ENCODE measurements at regions of chr6 and their contacts with region 1.

Region 1: GRCh38 chr6:138765896-138766655 is 7.5 kb upstream of the CCDC28A start:
- DNase-seq: peak in 1 of 2 experiments; percentile 25
- H3K4me3 ChIP-seq: no peak overlapping the region
- H3K4me3 Mint-ChIP-seq: no peak overlapping the region
- H3K27ac Mint-ChIP-seq: no peak overlapping the region
- H3K4me1 ChIP-seq: no peaks in the 10 kb centered on the region
- H3K4me1 Mint-ChIP-seq: no peaks in the 10 kb centered on the region
- H3K27me3 ChIP-seq: no peaks in the 10 kb centered on the region
- H3K27me3 Mint-ChIP-seq: no peaks in the 10 kb centered on the region
- CTCF ChIP-seq: peak; percentile 40 to 49

Region 2: GRCh38 chr6:138428944-138429598 is 337.0 kb before region 1 on chr6:
- CTCF ChIA-PET with region 1: no interaction called
- POLR2A ChIA-PET with region 1: no interaction called
- intact Hi-C with region 1: loop called (anchors 1 kb)
- DNase-seq: peak in 1 of 2 experiments; percentile 45
- H3K4me3 ChIP-seq: no peak overlapping the region
- H3K4me3 Mint-ChIP-seq: no peak overlapping the region
- H3K27ac Mint-ChIP-seq: no peak overlapping the region
- H3K4me1 ChIP-seq: no peaks in the 10 kb centered on the region
- H3K4me1 Mint-ChIP-seq: peaks cover 5% of the 10 kb centered on the region
- H3K27me3 ChIP-seq: no peaks in the 10 kb centered on the region
- H3K27me3 Mint-ChIP-seq: no peaks in the 10 kb centered on the region
- CTCF ChIP-seq: peak; percentile 59 to 65

Region 3: DNA sequence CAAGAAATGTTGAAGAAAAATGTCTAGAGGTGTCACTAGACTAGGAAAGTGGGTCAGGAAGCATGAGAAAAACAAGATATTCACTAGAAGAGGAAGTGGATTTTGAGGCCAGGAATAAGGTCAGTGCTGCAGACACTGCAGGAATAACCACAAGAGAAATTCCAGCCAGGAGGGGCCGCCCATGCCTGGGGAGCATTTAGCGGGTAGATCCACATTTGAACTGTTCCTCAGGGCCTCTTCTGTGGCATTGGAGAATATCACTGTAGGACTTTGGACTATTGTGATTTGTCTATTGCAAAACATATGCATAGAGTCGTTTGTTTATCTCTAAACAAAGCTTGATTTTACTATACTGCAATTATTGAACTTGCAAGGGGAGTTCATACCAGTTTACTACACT is 42.1 kb before region 1 on chr6:
- CTCF ChIA-PET with region 1: interaction called, 3 read pairs
- POLR2A ChIA-PET with region 1: no interaction called
- intact Hi-C with region 1: loop called (anchors 2 kb)
- DNase-seq: peak; percentile 67 to 75
- H3K4me3 ChIP-seq: no peak overlapping the region
- H3K4me3 Mint-ChIP-seq: peak overlapping the region; percentile 7
- H3K27ac Mint-ChIP-seq: no peak overlapping the region
- H3K4me1 ChIP-seq: peaks cover 32% of the 10 kb centered on the region
- H3K4me1 Mint-ChIP-seq: peaks cover 15% of the 10 kb centered on the region
- H3K27me3 ChIP-seq: no peaks in the 10 kb centered on the region
- H3K27me3 Mint-ChIP-seq: no peaks in the 10 kb centered on the region
- CTCF ChIP-seq: peak in 1 of 2 experiments; percentile 34